Right ventricle myocardium inferior (tissue), 1 donor: ENCODE measurements at regions of chr5 and their contacts with region 1.

Region 1: DNA sequence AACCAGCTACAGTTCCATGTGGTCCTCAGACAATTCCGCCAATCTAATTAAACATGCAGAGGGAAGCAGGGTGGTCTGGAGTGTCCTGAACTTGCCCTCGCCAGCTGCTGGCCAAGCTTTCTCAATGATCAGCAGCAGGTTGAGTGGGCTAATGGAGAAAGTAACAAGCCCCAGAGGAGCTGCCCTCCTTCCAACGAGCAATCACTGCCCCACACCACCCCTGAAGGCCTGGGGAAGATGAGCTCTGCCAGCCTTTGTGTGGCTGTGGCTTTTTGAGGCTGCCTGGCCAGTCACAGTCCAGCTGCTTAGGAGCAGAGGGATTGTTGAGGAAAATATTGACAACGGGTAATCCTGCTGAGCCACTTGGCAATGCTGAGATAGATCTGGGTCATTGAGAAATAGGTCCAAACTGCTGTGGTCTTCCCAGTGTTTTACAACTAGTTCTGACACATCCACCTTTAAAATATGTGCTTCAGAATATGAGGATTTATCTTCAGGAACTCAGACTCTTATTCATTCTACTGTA is 107.3 kb downstream of the CD180 start:
- DNase-seq: no peak
- ATAC-seq: no peak

Region 2: DNA sequence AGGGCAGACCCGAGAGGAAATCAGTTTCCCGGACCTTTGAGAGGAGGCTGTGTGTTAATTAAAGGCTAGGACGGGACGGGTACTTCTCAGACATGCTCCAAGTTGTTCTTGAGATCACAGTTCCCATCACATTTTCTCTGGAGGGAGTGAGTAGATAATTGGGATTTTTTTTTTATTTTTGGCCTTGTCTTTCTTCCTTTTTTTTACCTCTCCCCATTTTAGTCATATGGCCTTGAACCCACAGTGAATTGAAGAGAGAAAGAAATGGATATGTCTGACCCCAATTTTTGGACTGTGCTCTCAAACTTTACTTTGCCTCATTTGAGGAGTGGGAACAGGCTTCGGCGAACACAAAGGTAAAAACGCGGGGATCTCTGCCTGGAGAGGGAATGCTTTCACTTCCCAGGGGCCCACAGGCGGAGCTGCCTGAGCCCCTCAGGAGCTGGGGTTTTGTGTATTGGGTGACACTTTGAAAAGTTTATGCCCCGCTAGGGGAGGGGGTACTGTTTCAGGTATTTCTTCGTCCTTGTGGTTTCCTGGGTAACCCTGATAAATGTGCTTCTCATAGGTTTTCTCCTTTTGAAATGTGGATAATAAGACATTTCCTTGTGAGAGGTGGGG is 84.4 kb before region 1 on chr5:
- intact Hi-C with region 1: loop called (anchors 5 kb)
- DNase-seq: no peak
- ATAC-seq: no peak

Region 3: DNA sequence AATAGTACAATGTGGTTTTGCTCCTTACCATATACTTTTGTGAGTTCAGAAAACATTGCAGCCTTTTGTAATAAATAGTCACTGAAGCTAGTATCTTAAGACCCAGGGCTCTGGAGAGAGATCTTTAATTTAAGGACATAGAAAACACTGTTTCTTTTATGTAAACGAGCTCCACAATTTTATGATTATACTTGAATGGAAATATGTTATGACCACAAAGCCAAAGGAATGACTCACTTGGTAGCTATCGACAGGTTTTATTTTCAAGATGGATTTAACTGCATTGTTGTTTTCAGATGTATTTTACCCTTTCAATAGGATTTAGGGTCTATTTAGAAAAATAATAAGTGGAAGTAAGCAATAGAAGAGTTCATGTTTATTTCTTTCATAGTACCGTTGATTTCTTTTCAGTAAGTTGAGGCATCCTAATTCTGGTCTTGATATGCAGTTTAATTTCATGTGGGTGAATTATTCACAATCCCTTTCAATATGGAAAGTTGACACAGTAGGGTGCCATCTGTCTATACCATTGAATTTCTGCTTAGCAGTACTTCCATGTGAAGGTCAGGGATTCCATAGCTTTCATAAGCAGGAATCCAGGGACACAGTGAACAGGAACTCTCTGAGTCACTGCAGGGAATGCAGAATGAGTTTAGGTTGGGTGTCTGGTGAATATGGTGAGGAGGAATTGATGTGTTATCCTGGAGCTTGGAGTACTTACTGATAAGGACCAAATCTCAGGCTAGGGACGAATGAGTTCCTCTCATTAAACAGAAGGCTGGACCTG is 50.3 kb before region 1 on chr5:
- intact Hi-C with region 1: no loop called
- DNase-seq: no peak
- ATAC-seq: peak; percentile 48